ENCODE measurements at regions of chr16 and their contacts with region 1.

Region 1: GRCh38 chr16:75234856-75235696 is 16.3 kb downstream of the CTRB1 start:
- DNase-seq: no peak
- H3K4me3 Mint-ChIP-seq: no peak overlapping the region
- H3K27ac Mint-ChIP-seq: no peak overlapping the region
- H3K4me1 Mint-ChIP-seq: no peaks in the 10 kb centered on the region
- H3K27me3 Mint-ChIP-seq: no peaks in the 10 kb centered on the region

Region 2: GRCh38 chr16:75361936-75362335 is 126.9 kb after region 1 on chr16:
- CTCF ChIA-PET with region 1: interaction called, 10 read pairs
- POLR2A ChIA-PET with region 1: no interaction called
- DNase-seq: no peak
- H3K4me3 Mint-ChIP-seq: no peak overlapping the region
- H3K27ac Mint-ChIP-seq: no peak overlapping the region
- H3K4me1 Mint-ChIP-seq: no peaks in the 10 kb centered on the region
- H3K27me3 Mint-ChIP-seq: no peaks in the 10 kb centered on the region

Region 3: DNA sequence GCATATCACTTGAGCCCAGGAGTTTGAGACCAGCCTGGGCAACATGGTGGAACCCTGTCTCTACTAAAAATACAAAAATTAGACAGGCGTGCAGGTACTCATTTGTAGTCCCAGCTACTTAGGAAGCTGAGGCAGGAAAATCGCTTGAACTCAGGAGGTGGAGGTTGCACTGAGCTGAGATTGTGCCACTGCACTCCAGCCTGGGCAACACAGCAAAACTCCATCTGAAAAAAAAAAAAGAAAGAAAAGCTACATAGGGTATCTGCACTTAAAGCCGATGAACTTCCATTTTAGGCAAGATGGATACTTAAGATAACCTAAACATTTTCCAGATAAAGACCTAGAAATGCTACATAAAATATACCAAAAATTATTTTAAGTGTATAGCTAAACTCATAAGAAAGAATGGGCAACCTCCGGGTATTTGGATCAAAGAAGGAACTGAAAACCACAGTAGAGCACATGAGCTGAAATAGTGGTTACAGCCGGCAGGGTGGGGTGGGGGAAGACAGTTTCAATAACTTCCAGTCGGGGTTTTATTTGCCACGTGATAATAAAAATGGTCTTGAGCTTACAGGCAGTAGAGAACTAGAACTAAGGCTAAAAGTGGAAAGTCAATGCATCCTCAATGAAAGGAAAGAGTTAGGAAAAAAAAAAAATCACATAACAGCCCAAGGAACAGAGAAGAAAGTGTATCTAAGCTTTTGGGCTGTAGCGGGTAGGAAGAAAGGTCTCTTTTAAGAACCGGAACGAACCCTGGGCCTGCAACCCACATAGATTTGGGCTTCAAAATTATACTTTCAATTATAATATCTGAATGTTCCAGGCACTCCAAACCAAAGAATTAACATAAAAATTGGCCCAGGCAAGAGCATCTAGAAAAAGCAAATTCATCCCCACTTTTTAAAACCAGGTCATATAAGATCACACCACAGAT is 145.1 kb after region 1 on chr16:
- CTCF ChIA-PET with region 1: interaction called, 87 read pairs
- POLR2A ChIA-PET with region 1: interaction called, 7 read pairs
- DNase-seq: peak; percentile 59
- H3K4me3 Mint-ChIP-seq: peak overlapping the region; percentile 6
- H3K27ac Mint-ChIP-seq: peak overlapping the region; percentile 21
- H3K4me1 Mint-ChIP-seq: peaks cover 36% of the 10 kb centered on the region
- H3K27me3 Mint-ChIP-seq: peaks cover 43% of the 10 kb centered on the region

Region 4: GRCh38 chr16:75385507-75386152 is 150.6 kb after region 1 on chr16:
- CTCF ChIA-PET with region 1: interaction called, 87 read pairs
- POLR2A ChIA-PET with region 1: interaction called, 7 read pairs
- DNase-seq: no peak
- H3K4me3 Mint-ChIP-seq: no peak overlapping the region
- H3K27ac Mint-ChIP-seq: no peak overlapping the region
- H3K4me1 Mint-ChIP-seq: peaks cover 18% of the 10 kb centered on the region
- H3K27me3 Mint-ChIP-seq: peaks cover 14% of the 10 kb centered on the region

Region 5: DNA sequence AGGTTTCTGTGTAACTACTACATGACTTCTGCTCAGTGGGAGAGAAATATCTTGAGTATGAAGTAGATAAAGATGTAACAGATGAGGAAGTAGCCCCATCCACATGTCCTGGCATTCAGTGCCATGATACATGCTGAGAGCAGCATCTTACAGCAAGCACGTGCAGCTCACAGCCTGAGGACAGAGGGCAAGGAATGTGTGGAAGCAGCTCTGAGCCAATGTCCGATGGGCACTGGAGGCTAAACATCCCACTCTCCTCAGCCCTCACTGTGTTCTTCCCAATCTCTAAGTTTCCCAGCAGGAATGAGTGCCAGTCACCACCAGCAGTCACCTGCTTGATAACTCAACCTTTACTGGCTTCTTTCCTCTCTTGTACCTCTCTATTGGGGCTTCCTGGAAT is 157.8 kb after region 1 on chr16:
- CTCF ChIA-PET with region 1: interaction called, 87 read pairs
- POLR2A ChIA-PET with region 1: no interaction called
- DNase-seq: no peak
- H3K4me3 Mint-ChIP-seq: no peak overlapping the region
- H3K27ac Mint-ChIP-seq: no peak overlapping the region
- H3K4me1 Mint-ChIP-seq: peaks cover 8% of the 10 kb centered on the region
- H3K27me3 Mint-ChIP-seq: no peaks in the 10 kb centered on the region

Region 6: GRCh38 chr16:75402821-75403475 is 167.9 kb after region 1 on chr16:
- CTCF ChIA-PET with region 1: interaction called, 18 read pairs
- POLR2A ChIA-PET with region 1: no interaction called
- DNase-seq: no peak
- H3K4me3 Mint-ChIP-seq: no peak overlapping the region
- H3K27ac Mint-ChIP-seq: no peak overlapping the region
- H3K4me1 Mint-ChIP-seq: peaks cover 2% of the 10 kb centered on the region
- H3K27me3 Mint-ChIP-seq: no peaks in the 10 kb centered on the region